ENCODE measurements at regions of chr5 and their contacts with region 1.

Region 1: DNA sequence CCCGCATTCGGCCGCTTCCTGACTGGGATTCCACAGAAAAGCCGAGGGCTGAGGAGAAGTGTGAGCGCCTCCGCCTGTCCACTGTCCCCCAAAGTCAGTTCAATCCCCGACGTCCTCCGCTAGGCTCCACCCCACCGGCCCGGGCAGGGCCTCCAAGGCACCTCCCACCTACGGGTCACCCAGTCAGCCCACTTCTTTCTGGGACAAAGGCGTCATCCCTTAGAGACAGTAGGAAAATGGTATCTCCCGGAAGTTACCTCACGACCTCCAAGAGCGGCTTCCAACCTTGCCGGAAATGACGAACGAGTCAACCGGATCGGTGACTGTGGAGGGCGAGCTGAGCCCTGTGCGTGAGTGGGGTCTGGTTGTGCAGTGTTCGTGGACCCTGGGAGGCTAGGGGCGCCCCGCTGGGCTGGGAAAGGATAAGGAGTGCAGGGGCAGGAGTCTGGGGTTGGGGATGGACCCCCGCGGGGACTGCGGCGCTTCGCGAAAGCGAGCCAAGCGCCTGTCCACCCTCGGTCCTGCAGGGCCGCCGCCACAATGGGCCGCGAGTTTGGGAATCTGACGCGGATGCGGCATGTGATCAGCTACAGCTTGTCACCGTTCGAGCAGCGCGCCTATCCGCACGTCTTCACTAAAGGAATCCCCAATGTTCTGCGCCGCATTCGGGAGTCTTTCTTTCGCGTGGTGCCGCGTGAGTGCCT is at the starts of genes GDF9 and UQCRQ:
- DNase-seq: peak; percentile 89 to 97
- H3K4me3 ChIP-seq: peak within 1 kb of the TSS; percentile 76 to 96 (median 80)
- H3K27ac ChIP-seq: peak within 1 kb of the TSS; percentile 95
- H3K4me1 ChIP-seq: peaks cover 0 to 9% of the 10 kb centered on the region in 2 donors
- H3K27me3 ChIP-seq: no peaks in the 10 kb centered on the region
- CTCF ChIP-seq: no peak
- POLR2A ChIP-seq: peak; percentile 74
- total RNA-seq, gene GDF9: 0.33 to 0.64 (median 0.44) TPM
- total RNA-seq, gene UQCRQ: 106 to 184 (median 150) TPM

Region 2: GRCh38 chr5:132819468-132819867 is 47.0 kb before region 1 on chr5:
- intact Hi-C with region 1: no loop called
- DNase-seq: no peak
- H3K4me3 ChIP-seq: peak overlapping the region in 2 of 3 donors; percentile 46 to 55
- H3K27ac ChIP-seq: peak overlapping the region in 1 of 2 donors; percentile 18
- H3K4me1 ChIP-seq: no peaks in the 10 kb centered on the region
- H3K27me3 ChIP-seq: no peaks in the 10 kb centered on the region
- CTCF ChIP-seq: no peak
- POLR2A ChIP-seq: no peak

Region 3: GRCh38 chr5:132829742-132830435 is 36.6 kb before region 1 on chr5:
- intact Hi-C with region 1: loop called (anchors 1 kb)
- DNase-seq: peak; percentile 67 to 80
- H3K4me3 ChIP-seq: peak overlapping the region; percentile 59 to 84 (median 81)
- H3K27ac ChIP-seq: peak overlapping the region; percentile 87 to 89
- H3K4me1 ChIP-seq: no peaks in the 10 kb centered on the region
- H3K27me3 ChIP-seq: no peaks in the 10 kb centered on the region
- CTCF ChIP-seq: peak; percentile 70 to 85 (median 78)
- POLR2A ChIP-seq: no peak

Region 4: GRCh38 chr5:133075572-133076536 is 209.4 kb after region 1 on chr5:
- intact Hi-C with region 1: no loop called
- DNase-seq: no peak
- H3K4me3 ChIP-seq: no peak overlapping the region
- H3K27ac ChIP-seq: no peak overlapping the region
- H3K4me1 ChIP-seq: no peaks in the 10 kb centered on the region
- H3K27me3 ChIP-seq: no peaks in the 10 kb centered on the region
- CTCF ChIP-seq: no peak
- POLR2A ChIP-seq: no peak

Measured in breast epithelium (tissue), 4 donors.